Left cardiac atrium (tissue), 4 donors: ENCODE measurements at regions of chr15 and their contacts with region 1.

Region 1: DNA sequence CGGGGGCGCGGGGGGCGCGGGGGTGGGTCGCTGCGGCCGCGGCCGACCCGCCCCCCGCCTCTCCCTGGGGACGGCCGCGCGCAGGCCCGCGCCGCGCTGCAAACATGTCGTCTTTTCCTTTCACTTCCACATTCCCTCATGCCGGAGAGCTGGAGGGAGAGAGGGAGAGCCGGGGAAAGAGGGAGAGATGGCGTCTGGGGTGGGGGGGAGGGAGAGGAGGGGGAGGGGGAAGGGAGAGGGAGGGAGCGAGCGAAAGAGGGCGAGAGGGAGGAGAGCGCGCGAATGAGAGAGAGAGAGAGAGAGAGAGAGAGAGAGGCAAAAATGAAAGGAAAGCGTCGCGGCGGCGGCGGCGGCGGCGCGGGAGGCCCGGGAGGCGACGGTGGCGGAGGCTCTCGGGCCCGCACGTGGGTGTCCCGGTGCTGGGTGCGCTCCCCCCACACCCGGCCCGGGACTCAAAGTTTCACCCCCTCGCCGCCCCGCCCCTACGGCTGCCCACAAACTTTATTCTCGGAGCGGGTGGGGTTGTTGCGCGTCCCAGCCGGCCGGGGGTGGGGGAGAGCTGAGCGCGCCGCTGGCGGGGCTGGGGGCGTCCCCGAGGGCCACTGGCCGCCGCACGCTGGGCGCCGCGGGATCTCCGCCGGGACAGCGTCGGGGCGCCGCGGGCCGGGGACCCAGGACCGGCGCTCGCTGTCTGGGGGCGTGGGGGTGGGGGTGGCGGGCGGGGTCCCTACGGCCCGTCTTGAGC is 731 bp downstream of the ZNF710 start:
- DNase-seq: peak; percentile 64
- ATAC-seq: peak; percentile 41 to 48

Region 2: DNA sequence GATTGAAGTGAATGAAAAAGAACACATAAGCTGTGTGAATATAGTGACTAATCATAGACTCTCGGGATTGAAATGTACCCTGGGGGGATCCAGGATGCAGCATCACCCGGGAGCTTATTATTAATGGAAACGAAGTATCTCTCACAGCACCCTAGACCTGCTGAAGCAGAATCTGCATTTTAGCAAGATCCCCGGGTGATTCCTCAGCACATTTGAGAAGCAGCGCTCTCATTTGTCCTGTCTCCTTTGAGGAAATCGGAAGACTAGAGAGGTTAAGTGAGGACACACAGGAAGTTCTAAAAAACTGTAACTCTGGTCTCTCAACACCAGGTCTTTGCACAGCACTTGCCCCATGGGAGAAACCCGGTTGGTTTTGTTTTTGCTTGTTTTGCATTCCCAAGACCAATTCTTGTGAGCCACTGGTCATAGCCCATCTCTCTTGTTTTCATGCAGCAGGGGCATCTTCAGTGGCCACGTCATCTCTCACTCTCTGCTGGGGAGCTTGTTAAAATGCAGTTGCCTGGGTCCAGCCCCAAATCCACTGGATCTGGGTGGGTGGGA is 29.5 kb after region 1 on chr15:
- intact Hi-C with region 1: no loop called
- DNase-seq: no peak
- ATAC-seq: peak in 1 of 2 donors; percentile 29

Region 3: GRCh38 chr15:90071208-90071807 is 69.5 kb after region 1 on chr15:
- intact Hi-C with region 1: loop called (anchors 5 to 10 kb)
- DNase-seq: peak; percentile 90
- ATAC-seq: peak; percentile 70 to 81

Region 4: GRCh38 chr15:90106522-90107117 is 104.8 kb after region 1 on chr15:
- intact Hi-C with region 1: no loop called
- DNase-seq: peak; percentile 61
- ATAC-seq: peak; percentile 49 to 51